ENCODE measurements at regions of chr1 and their contacts with region 1.

Region 1: GRCh38 chr1:32933742-32934322 is 30.8 kb downstream of the RNF19B start:
- DNase-seq: peak; percentile 40 to 82 (median 66)
- H3K4me3 ChIP-seq: no peak overlapping the region
- H3K27ac ChIP-seq: peak overlapping the region in 2 of 5 donors; percentile 43 to 50
- H3K4me1 ChIP-seq: peaks cover 3 to 11% of the 10 kb centered on the region in 2 donors
- H3K27me3 ChIP-seq: no peaks in the 10 kb centered on the region
- CTCF ChIP-seq: peak in 1 of 6 experiments; percentile 43
- POLR2A ChIP-seq: no peak

Region 2: GRCh38 chr1:32665915-32666314 is 267.9 kb before region 1 on chr1:
- intact Hi-C with region 1: no loop called
- DNase-seq: no peak
- H3K4me3 ChIP-seq: no peak overlapping the region
- H3K27ac ChIP-seq: no peak overlapping the region
- H3K4me1 ChIP-seq: no peaks in the 10 kb centered on the region
- H3K27me3 ChIP-seq: no peaks in the 10 kb centered on the region
- CTCF ChIP-seq: no peak
- POLR2A ChIP-seq: no peak

Region 3: DNA sequence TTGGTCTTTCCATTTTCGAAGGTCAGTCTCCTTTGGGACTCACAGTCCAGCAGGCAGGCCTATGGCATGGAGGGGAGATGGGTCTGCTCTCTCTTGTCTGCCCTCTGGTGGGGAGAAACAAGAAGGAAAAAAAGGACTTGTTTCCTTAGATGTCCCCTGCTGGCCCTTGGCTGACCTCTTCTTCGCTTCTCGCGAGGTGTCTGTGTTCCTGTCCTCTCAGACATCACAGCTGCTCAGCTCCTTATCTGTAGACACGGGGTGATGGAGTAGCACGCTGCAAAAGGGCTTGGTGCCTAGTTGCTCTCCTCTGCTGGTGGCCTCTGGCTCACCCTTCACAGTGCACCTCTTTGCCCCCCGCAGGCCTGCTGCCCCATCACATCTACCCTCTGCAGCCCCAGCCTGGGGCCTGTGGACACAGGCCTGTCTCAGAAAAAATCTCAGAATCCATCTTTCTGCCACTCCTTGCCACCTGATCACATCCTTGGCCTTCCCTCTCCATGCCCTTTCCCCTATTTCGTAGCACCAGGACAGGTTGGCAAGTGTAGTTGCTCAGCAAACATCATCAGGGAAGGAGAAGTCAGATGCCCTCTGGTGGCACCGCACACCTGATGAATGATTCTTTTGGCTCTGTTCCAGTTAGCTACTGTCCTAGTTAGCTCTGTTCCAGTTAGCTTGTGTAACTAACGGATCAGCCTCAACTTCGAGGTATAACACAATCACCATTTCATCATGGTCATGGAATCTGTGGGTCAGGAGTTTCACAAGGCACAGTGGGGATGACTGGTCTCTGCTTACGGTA is 121.6 kb after region 1 on chr1:
- intact Hi-C with region 1: loop called in 1 of 2 experiments (anchors 5 kb)
- DNase-seq: peak; percentile 73 to 95 (median 88)
- H3K4me3 ChIP-seq: no peak overlapping the region
- H3K27ac ChIP-seq: peak overlapping the region in 1 of 5 donors; percentile 34
- H3K4me1 ChIP-seq: peaks cover 0 to 8% of the 10 kb centered on the region in 2 donors
- H3K27me3 ChIP-seq: no peaks in the 10 kb centered on the region
- CTCF ChIP-seq: peak; percentile 60 to 86 (median 82)
- POLR2A ChIP-seq: no peak

Measured in adrenal gland (tissue), 19 donors.